Activated CD4-positive, alpha-beta T cell treated with anti-CD3 and anti-CD28 coated beads, Interleukin-2, amount 10 ng/mL, durations not matched to agents 24 days and 14 days (primary cell): ENCODE measurements at regions of chr2 and their contacts with region 1.

Region 1: GRCh38 chr2:177392373-177393202 is at the start of gene AGPS:
- DNase-seq: peak; percentile 95
- H3K4me3 Mint-ChIP-seq: peak within 1 kb of the TSS; percentile 91
- H3K27ac Mint-ChIP-seq: peak within 1 kb of the TSS; percentile 95
- H3K4me1 Mint-ChIP-seq: peaks cover 54% of the 10 kb centered on the region
- H3K27me3 Mint-ChIP-seq: no peaks in the 10 kb centered on the region
- total RNA-seq, gene AGPS: 74.0 and 76.7 TPM in 2 replicates

Region 2: DNA sequence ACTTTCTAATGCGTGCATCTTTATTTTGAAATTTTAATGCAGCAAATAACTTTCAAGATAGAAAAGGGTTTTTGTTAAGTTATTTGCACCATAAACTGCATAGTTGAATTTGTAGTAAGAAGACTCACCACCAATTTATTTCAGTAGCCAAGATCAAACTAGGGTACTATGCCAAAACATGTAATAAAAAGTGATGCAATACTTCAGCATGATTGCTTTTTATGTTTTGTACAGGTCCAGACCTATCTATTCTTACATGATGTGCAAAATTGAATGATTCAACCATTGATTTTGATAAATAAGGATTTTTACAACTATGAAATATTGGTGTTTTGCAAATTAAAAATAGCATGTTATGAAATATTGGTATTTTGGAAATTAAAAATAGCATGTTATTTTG is 26.7 kb after region 1 on chr2:
- intact Hi-C with region 1: loop called (anchors 2 kb)
- DNase-seq: no peak
- H3K4me3 Mint-ChIP-seq: no peak overlapping the region
- H3K27ac Mint-ChIP-seq: no peak overlapping the region
- H3K4me1 Mint-ChIP-seq: peaks cover 14% of the 10 kb centered on the region
- H3K27me3 Mint-ChIP-seq: no peaks in the 10 kb centered on the region

Region 3: DNA sequence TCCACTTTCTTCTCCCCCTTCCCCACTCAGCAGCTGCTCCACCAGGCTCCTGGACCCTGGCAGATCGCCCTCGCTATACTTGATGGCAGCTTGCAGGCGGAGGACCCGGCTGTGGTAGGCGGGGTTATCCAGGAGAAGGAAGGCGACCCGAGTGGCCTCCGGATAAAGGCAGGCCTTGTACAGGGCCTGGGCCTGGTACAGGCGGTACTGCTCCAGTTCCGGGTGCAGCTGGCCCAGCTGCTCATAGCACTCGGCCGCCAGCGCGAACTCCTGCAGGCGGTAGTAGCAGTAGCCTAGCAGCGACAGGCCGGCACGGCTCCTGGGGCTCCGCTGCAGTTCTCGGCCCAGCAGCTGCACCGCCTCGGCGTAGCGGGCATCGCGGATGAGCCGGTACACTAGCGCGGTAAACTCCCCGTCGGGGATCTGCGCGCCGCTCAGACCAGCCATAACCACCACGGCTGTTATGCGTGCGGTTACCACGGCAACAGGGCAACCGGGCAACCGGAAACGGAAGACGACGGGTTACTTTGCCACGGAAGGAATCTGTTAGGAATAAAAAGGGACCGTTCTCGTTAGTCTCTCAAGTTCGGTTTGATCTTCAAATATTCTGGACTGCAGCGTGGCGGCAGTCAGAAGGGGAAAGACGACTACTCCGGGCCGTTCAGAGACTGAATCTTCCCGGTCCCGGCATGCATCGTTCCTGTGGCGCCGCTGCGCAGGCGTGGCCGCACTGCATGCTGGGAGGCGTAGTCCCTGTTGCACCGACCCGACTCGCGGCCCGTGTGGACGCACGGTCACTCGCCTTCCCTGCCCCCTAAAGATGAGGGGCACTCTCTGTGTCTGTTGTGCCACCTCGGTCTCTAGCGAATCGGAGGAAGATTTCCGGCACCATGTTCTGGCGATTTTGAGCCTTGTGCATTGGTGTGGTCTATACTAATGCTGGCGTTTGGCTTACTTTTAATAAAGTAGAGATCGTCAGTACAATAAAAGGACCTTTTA is 226.0 kb after region 1 on chr2:
- intact Hi-C with region 1: loop called (anchors 1 kb)
- DNase-seq: peak; percentile 98
- H3K4me3 Mint-ChIP-seq: peak overlapping the region; percentile 92
- H3K27ac Mint-ChIP-seq: peak overlapping the region; percentile 97
- H3K4me1 Mint-ChIP-seq: peaks cover 8% of the 10 kb centered on the region
- H3K27me3 Mint-ChIP-seq: peaks cover 24% of the 10 kb centered on the region